ENCODE measurements at regions of chr9 and their contacts with region 1.

Region 1: GRCh38 chr9:131349881-131350563 is 43.9 kb upstream of the PRRC2B start:
- DNase-seq: peak; percentile 85
- H3K4me3 ChIP-seq: peak overlapping the region in 2 of 3 experiments; percentile 9 to 17
- H3K27ac ChIP-seq: no peak overlapping the region
- H3K4me1 ChIP-seq: peaks cover 2% of the 10 kb centered on the region
- H3K27me3 ChIP-seq: no peaks in the 10 kb centered on the region
- CTCF ChIP-seq: peak; percentile 76 to 92
- POLR2A ChIP-seq: no peak

Region 2: DNA sequence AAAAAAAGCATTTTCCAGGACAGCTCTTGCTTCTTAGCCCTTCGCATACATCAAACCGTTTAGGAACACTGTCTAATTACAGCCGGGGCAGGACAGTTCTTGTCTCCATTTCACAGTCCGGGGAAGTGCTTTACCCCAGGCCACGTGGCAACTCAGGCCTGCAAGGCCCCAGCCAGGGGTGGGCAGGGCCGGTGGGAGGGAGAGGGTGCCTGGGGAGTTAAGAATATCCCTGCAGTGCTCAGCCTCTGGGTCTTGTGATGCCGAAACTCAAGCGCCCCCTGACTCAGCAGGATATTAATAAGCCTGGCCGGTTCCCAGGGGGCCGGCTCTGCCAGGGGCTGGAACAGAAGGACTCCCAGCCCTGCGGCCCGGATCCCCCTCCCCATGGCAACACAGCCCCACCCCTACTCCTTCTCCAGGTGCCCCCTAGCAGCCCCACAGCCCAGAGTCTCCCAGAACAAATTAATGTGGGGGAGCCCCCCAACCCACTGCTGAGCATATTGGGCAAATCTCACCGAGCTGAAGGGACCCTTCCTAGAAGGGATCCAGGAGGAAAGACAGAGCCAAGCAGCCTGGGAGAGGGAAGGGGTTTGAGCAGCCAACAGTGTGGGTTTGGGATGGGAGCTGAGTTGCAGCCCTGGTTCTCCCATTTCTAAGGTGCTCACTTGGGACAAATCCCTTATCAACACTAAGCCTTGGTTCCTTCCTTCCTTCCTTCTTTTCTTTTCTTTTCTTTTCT is 15.2 kb before region 1 on chr9:
- CTCF ChIA-PET with region 1: interaction called, 21 read pairs
- POLR2A ChIA-PET with region 1: no interaction called
- dilution Hi-C with region 1: no loop called
- intact Hi-C with region 1: no loop called
- DNase-seq: peak; percentile 48
- H3K4me3 ChIP-seq: no peak overlapping the region
- H3K27ac ChIP-seq: no peak overlapping the region
- H3K4me1 ChIP-seq: peaks cover 12% of the 10 kb centered on the region
- H3K27me3 ChIP-seq: no peaks in the 10 kb centered on the region
- CTCF ChIP-seq: no peak
- POLR2A ChIP-seq: no peak

Region 3: GRCh38 chr9:131366761-131367401 is 16.9 kb after region 1 on chr9:
- CTCF ChIA-PET with region 1: interaction called, 27 read pairs
- POLR2A ChIA-PET with region 1: no interaction called
- dilution Hi-C with region 1: no loop called
- intact Hi-C with region 1: no loop called
- DNase-seq: peak; percentile 60
- H3K4me3 ChIP-seq: no peak overlapping the region
- H3K27ac ChIP-seq: no peak overlapping the region
- H3K4me1 ChIP-seq: no peaks in the 10 kb centered on the region
- H3K27me3 ChIP-seq: no peaks in the 10 kb centered on the region
- CTCF ChIP-seq: peak; percentile 28 to 54
- POLR2A ChIP-seq: no peak

Region 4: DNA sequence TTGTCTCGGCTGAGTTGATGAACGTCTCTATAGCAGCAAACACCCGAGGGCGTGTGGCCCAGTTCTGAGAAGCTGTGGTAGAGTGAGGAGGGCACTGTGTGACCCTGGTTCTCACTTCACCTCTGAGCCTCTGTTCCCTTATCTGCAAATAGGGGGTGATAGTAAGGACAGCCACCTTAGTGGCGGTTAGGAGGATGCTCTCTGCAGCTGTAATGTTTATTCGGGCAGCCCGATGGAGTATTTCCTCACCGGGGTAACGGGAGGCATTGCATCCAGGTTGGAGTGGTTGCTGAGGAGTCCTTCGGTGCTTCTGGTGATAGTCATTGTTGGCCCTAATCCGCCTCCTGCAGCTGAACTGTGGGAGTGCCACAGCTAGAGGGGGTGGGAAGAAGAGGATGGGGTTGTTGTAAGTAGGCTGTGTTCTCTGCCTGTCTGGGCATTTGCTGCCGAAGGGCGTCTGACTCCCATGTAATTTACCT is 57.7 kb after region 1 on chr9:
- CTCF ChIA-PET with region 1: interaction called, 11 read pairs
- POLR2A ChIA-PET with region 1: no interaction called
- dilution Hi-C with region 1: no loop called
- intact Hi-C with region 1: loop called (anchors 1 kb)
- DNase-seq: peak; percentile 63
- H3K4me3 ChIP-seq: no peak overlapping the region
- H3K27ac ChIP-seq: peak overlapping the region; percentile 33
- H3K4me1 ChIP-seq: peaks cover 46% of the 10 kb centered on the region
- H3K27me3 ChIP-seq: no peaks in the 10 kb centered on the region
- CTCF ChIP-seq: peak; percentile 22 to 35
- POLR2A ChIP-seq: no peak

Region 5: DNA sequence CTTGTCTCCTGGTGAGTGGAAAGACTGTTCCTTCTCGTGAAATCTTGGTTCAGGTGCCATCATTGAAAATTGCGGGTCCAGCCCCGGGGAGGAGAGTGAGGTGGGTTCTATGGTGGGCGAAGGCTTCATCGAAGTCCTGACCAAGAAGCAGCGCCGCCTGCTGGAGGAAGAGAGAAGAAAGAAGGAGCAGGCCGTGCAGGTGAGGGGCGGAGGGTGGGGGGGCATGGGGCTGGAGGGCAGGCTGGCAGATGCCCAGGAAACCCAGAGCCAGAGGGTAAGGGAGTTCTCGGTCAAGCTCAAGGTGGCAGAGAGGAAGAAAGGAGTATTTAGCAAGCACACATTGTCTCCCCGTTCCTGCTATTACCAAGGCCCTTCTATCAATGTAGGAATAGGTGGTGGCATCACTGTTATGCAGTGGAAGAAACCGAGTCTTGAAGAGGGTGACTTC is 128.4 kb after region 1 on chr9:
- CTCF ChIA-PET with region 1: interaction called, 35 read pairs
- POLR2A ChIA-PET with region 1: no interaction called
- dilution Hi-C with region 1: no loop called
- intact Hi-C with region 1: loop called (anchors 1 kb)
- DNase-seq: peak; percentile 29
- H3K4me3 ChIP-seq: no peak overlapping the region
- H3K27ac ChIP-seq: no peak overlapping the region
- H3K4me1 ChIP-seq: no peaks in the 10 kb centered on the region
- H3K27me3 ChIP-seq: no peaks in the 10 kb centered on the region
- CTCF ChIP-seq: peak; percentile 43 to 66
- POLR2A ChIP-seq: no peak

Region 6: GRCh38 chr9:131530920-131531832 is 181.2 kb after region 1 on chr9 and contains the start of gene UCK1:
- CTCF ChIA-PET with region 1: interaction called, 3 read pairs
- POLR2A ChIA-PET with region 1: no interaction called
- dilution Hi-C with region 1: no loop called
- intact Hi-C with region 1: loop called (anchors 2 kb)
- DNase-seq: peak; percentile 83
- H3K4me3 ChIP-seq: peak within 1 kb of the TSS; percentile 40 to 73 (median 57)
- H3K27ac ChIP-seq: peak within 1 kb of the TSS; percentile 25
- H3K4me1 ChIP-seq: peaks cover 4% of the 10 kb centered on the region
- H3K27me3 ChIP-seq: no peaks in the 10 kb centered on the region
- CTCF ChIP-seq: no peak
- POLR2A ChIP-seq: peak; percentile 76
- total RNA-seq, gene UCK1: 23.6 and 24.1 TPM in 2 replicates

Region 7: GRCh38 chr9:131747356-131747755 is 397.3 kb after region 1 on chr9:
- CTCF ChIA-PET with region 1: interaction called, 6 read pairs
- POLR2A ChIA-PET with region 1: no interaction called
- dilution Hi-C with region 1: no loop called
- intact Hi-C with region 1: loop called (anchors 5 kb)
- DNase-seq: peak; percentile 72
- H3K4me3 ChIP-seq: no peak overlapping the region
- H3K27ac ChIP-seq: no peak overlapping the region
- H3K4me1 ChIP-seq: no peaks in the 10 kb centered on the region
- H3K27me3 ChIP-seq: peaks cover 0 to 3% of the 10 kb centered on the region in 2 experiments
- CTCF ChIP-seq: peak; percentile 50 to 63
- POLR2A ChIP-seq: no peak

Measured in endothelial cell of umbilical vein (primary cell).